Ascending aorta (tissue), 2 donors: ENCODE measurements at regions of chr3 and their contacts with region 1.

Region 1: GRCh38 chr3:37546905-37547304 is 314.8 kb upstream of the CTDSPL start:
- DNase-seq: peak in 1 of 2 donors; percentile 78
- H3K4me3 ChIP-seq: no peak overlapping the region
- H3K27ac ChIP-seq: peak overlapping the region; percentile 41 to 79
- H3K4me1 ChIP-seq: peaks cover 0 to 19% of the 10 kb centered on the region in 2 donors
- H3K27me3 ChIP-seq: no peaks in the 10 kb centered on the region
- CTCF ChIP-seq: peak; percentile 14 to 33 (median 30)

Region 2: GRCh38 chr3:37456270-37456708 is 90.6 kb before region 1 on chr3:
- intact Hi-C with region 1: loop called (anchors 1 kb)
- DNase-seq: peak; percentile 66 to 94
- H3K4me3 ChIP-seq: peak overlapping the region in 1 of 2 donors; percentile 82
- H3K27ac ChIP-seq: peak overlapping the region; percentile 94 to 95
- H3K4me1 ChIP-seq: peaks cover 15 to 49% of the 10 kb centered on the region in 2 donors
- H3K27me3 ChIP-seq: no peaks in the 10 kb centered on the region
- CTCF ChIP-seq: no peak

Region 3: DNA sequence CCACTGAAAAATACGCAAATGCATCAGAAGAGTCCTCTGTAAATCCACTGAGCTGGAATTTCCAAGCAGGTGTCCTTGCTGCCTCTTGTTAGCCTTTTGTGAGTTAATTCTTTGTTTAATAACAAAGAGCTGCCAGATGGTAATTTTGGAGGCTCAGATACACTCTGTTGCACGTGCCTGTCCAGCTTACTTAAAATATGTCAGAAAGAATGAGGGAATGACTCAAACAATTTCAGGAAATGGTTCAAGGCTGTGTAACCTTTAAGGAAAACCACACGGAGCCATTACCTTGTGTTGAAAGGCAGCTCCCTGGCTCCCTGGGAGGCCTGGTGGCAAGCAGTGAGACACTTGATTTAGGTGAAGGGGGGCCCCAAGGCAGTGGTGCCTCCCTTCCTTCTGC is 12.6 kb after region 1 on chr3:
- intact Hi-C with region 1: no loop called
- DNase-seq: peak in 1 of 2 donors; percentile 70
- H3K4me3 ChIP-seq: no peak overlapping the region
- H3K27ac ChIP-seq: peak overlapping the region; percentile 63 to 81
- H3K4me1 ChIP-seq: peaks cover 0 to 18% of the 10 kb centered on the region in 2 donors
- H3K27me3 ChIP-seq: no peaks in the 10 kb centered on the region
- CTCF ChIP-seq: no peak